ENCODE measurements at regions of chr11 and their contacts with region 1.

Region 1: DNA sequence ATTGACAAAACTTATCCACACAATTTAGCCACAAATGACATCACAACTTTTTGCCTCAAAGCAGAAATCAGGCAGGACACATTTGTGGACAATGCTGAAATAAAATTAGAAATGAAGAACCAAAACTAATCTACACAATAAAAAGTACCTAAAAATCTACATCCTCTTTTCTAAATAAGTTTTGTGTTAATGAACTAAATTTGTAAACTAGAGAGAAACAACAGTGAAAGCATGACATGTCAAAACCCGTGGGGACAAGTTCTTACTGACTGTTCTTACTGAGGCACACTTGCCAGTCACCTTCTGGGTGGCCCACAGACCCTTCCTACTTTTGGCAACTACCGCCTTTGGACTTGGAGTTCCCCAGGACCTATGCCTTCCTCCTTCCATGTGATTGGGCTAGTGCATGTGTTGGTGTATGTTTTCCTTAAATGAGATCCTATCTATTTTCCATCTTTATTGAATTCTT is 60.7 kb upstream of the MUC15 start:
- DNase-seq: no peak
- H3K4me3 ChIP-seq: no peak overlapping the region
- H3K27ac ChIP-seq: no peak overlapping the region
- H3K4me1 ChIP-seq: no peaks in the 10 kb centered on the region
- H3K27me3 ChIP-seq: no peaks in the 10 kb centered on the region

Region 2: GRCh38 chr11:26219183-26220117 is 413.3 kb before region 1 on chr11:
- in situ Hi-C with region 1: no loop called
- DNase-seq: no peak
- H3K4me3 ChIP-seq: no peak overlapping the region
- H3K27ac ChIP-seq: no peak overlapping the region
- H3K4me1 ChIP-seq: no peaks in the 10 kb centered on the region
- H3K27me3 ChIP-seq: no peaks in the 10 kb centered on the region

Region 3: DNA sequence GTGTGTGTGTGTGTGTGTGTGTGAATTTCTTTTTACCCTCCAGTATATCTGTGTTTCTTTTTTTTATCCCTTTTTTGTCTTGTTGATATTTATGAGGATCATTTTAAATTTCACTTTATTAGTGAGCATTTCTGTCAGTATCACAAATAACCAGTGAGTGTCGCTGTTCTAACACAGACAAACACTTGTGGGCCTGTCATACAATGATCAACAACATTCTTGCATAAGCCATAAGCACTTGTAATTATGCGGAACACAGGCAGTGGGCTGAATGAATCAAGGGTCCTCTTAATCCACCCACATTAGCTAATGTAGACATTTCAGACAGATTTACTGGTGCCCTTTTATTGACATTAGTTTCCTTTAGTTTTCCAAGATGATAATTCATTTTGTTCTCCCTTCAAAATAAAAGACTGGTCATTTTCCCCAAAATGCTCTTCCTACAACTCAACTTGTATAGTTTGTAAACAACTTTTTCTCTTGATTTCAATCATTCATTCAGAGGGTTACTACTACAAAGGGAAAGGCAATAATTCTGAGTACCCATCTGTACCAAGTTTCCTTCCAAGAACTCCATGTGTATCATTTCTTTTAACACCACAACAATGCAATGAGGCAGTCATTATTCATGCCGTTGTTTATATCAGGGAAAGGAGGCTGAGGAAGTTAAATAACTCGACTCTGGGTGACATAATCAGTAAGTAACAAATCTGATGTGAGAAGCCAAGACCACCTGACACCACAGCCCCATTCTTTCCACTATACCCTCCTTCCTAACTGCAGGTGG is 335.3 kb before region 1 on chr11:
- in situ Hi-C with region 1: loop called (anchors 10 kb)
- DNase-seq: peak; percentile 79
- H3K4me3 ChIP-seq: no peak overlapping the region
- H3K27ac ChIP-seq: no peak overlapping the region
- H3K4me1 ChIP-seq: no peaks in the 10 kb centered on the region
- H3K27me3 ChIP-seq: no peaks in the 10 kb centered on the region

Region 4: GRCh38 chr11:26878959-26879581 is 246.3 kb after region 1 on chr11:
- in situ Hi-C with region 1: no loop called
- DNase-seq: no peak
- H3K4me3 ChIP-seq: no peak overlapping the region
- H3K27ac ChIP-seq: no peak overlapping the region
- H3K4me1 ChIP-seq: no peaks in the 10 kb centered on the region
- H3K27me3 ChIP-seq: no peaks in the 10 kb centered on the region

Measured in GM23248 (cell line).